Heart right ventricle (tissue), 16 donors: ENCODE measurements at regions of chr5 and their contacts with region 1.

Region 1: GRCh38 chr5:38193015-38193581 is 65.3 kb upstream of the EGFLAM start:
- DNase-seq: peak; percentile 56 to 66
- ATAC-seq: peak; percentile 67 to 89 (median 76)
- H3K4me3 ChIP-seq: no peak overlapping the region
- H3K27ac ChIP-seq: no peak overlapping the region
- H3K4me1 ChIP-seq: no peaks in the 10 kb centered on the region
- H3K27me3 ChIP-seq: peaks cover 0 to 29% (median 21%) of the 10 kb centered on the region in 7 donors
- CTCF ChIP-seq: peak; percentile 68 to 88 (median 86)

Region 2: GRCh38 chr5:37412515-37413277 is 780.4 kb before region 1 on chr5:
- intact Hi-C with region 1: loop called in 9 of 10 experiments (anchors 5 to 10 kb)
- DNase-seq: peak in 1 of 2 donors; percentile 60
- ATAC-seq: peak; percentile 65 to 88 (median 80)
- H3K4me3 ChIP-seq: no peak overlapping the region
- H3K27ac ChIP-seq: no peak overlapping the region
- H3K4me1 ChIP-seq: no peaks in the 10 kb centered on the region
- H3K27me3 ChIP-seq: no peaks in the 10 kb centered on the region
- CTCF ChIP-seq: peak; percentile 51 to 91 (median 86)

Region 3: GRCh38 chr5:37495210-37495609 is 697.9 kb before region 1 on chr5:
- intact Hi-C with region 1: loop called in 1 of 10 experiments (anchors 10 kb)
- DNase-seq: no peak
- ATAC-seq: peak in 1 of 8 donors; percentile 35
- H3K4me3 ChIP-seq: no peak overlapping the region
- H3K27ac ChIP-seq: no peak overlapping the region
- H3K4me1 ChIP-seq: peaks cover 0 to 6% (median 0%) of the 10 kb centered on the region in 9 donors
- H3K27me3 ChIP-seq: no peaks in the 10 kb centered on the region
- CTCF ChIP-seq: no peak